HepG2 (cell line): ENCODE measurements at regions of chr15 and their contacts with region 1.

Region 1: DNA sequence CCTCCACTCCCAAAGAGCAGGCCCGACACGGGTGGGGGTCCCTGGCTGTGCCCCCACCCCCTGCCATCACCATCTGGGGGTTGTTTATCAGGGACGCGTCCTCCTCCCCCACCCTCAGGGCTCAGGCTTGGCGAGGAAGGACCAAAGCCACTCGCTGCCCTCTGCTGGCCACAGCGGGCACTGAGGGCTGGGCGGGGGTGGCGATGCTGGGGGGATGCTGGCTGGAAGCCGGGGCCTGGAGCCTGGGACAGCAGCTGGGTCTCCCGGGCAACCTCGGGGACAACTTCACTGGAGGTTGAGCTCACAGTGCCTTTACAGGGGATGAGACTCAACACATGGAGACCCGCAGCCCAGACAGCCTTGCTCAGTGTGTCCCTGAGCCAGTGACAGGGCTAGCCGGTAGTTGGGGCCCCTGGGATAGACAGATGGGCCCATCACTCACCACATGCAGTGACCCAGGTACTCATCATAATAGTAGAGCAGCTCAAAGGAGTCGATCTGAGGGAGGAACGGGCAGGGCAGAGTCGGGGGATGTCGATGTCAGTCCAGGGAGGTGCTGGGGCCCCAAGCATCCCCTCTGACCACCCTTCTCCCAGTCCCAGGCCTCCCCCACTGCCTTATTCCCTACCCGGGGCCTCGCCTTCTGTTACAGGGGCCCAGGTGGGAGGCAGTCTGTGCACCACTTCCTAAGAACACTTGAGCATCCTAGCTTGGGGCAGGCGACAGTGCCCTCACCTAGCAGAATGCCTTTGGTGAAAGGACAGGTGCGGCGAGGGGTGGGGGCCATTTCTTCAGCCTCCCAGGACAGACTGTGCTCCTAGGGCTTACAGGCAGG is 5.9 kb upstream of the CALML4 start:
- DNase-seq: no peak
- ATAC-seq: peak; percentile 79
- H3K4me3 ChIP-seq: no peak overlapping the region
- H3K27ac ChIP-seq: no peak overlapping the region
- H3K4me1 ChIP-seq: peaks cover 5% of the 10 kb centered on the region
- H3K27me3 ChIP-seq: no peaks in the 10 kb centered on the region
- CTCF ChIP-seq: peak; percentile 90
- EP300 ChIP-seq: no peak
- POLR2A ChIP-seq: no peak
- RAD21 ChIP-seq: peak; percentile 69

Region 2: GRCh38 chr15:68042156-68042854 is 168.7 kb before region 1 on chr15:
- CTCF ChIA-PET with region 1: no interaction called
- POLR2A ChIA-PET with region 1: no interaction called
- in situ Hi-C with region 1: no loop called
- intact Hi-C with region 1: no loop called
- DNase-seq: peak; percentile 50
- ATAC-seq: peak; percentile 44
- H3K4me3 ChIP-seq: peak overlapping the region in 1 of 3 experiments; percentile 14; a peak in 1 of 6 replicates
- H3K27ac ChIP-seq: no peak overlapping the region
- H3K4me1 ChIP-seq: peaks cover 39% of the 10 kb centered on the region
- H3K27me3 ChIP-seq: no peaks in the 10 kb centered on the region
- CTCF ChIP-seq: no peak
- EP300 ChIP-seq: peak in 1 of 2 experiments; percentile 10; a peak in 1 of 4 replicates
- POLR2A ChIP-seq: no peak
- RAD21 ChIP-seq: no peak

Region 3: GRCh38 chr15:68195336-68196112 is 15.5 kb before region 1 on chr15:
- CTCF ChIA-PET with region 1: interaction called, 9 read pairs
- POLR2A ChIA-PET with region 1: no interaction called
- in situ Hi-C with region 1: no loop called
- intact Hi-C with region 1: loop called (anchors 1 kb)
- DNase-seq: no peak
- ATAC-seq: no peak
- H3K4me3 ChIP-seq: no peak overlapping the region
- H3K27ac ChIP-seq: no peak overlapping the region
- H3K4me1 ChIP-seq: peaks cover 37% of the 10 kb centered on the region
- H3K27me3 ChIP-seq: no peaks in the 10 kb centered on the region
- CTCF ChIP-seq: no peak
- EP300 ChIP-seq: no peak
- POLR2A ChIP-seq: no peak
- RAD21 ChIP-seq: no peak

Region 4: GRCh38 chr15:68578174-68578979 is 367.3 kb after region 1 on chr15:
- CTCF ChIA-PET with region 1: no interaction called
- POLR2A ChIA-PET with region 1: no interaction called
- in situ Hi-C with region 1: no loop called
- intact Hi-C with region 1: no loop called
- DNase-seq: no peak
- ATAC-seq: peak; percentile 50
- H3K4me3 ChIP-seq: peak overlapping the region; percentile 16 to 58 (median 33); a peak in 4 of 6 replicates
- H3K27ac ChIP-seq: no peak overlapping the region
- H3K4me1 ChIP-seq: peaks cover 20% of the 10 kb centered on the region
- H3K27me3 ChIP-seq: peaks cover 10 to 68% of the 10 kb centered on the region in 2 experiments
- CTCF ChIP-seq: peak; percentile 29; the same call in 1 of the 2 replicates
- EP300 ChIP-seq: no peak
- POLR2A ChIP-seq: no peak
- RAD21 ChIP-seq: 0 out of 2 replicates have a peak, but pooled peaks have one; percentile 25